CD8-positive, alpha-beta T cell (primary cell): ENCODE measurements at regions of chr14 and their contacts with region 1.

Region 1: GRCh38 chr14:33617190-33617622 is 333.7 kb downstream of the EGLN3 start:
- DNase-seq: no peak
- ATAC-seq: no peak
- H3K4me3 ChIP-seq: no peak overlapping the region
- H3K4me3 Mint-ChIP-seq: no peak overlapping the region
- H3K27ac ChIP-seq: no peak overlapping the region
- H3K27ac Mint-ChIP-seq: no peak overlapping the region
- H3K4me1 ChIP-seq: no peaks in the 10 kb centered on the region
- H3K4me1 Mint-ChIP-seq: no peaks in the 10 kb centered on the region
- H3K27me3 ChIP-seq: no peaks in the 10 kb centered on the region
- H3K27me3 Mint-ChIP-seq: no peaks in the 10 kb centered on the region
- CTCF ChIP-seq: no peak

Region 2: DNA sequence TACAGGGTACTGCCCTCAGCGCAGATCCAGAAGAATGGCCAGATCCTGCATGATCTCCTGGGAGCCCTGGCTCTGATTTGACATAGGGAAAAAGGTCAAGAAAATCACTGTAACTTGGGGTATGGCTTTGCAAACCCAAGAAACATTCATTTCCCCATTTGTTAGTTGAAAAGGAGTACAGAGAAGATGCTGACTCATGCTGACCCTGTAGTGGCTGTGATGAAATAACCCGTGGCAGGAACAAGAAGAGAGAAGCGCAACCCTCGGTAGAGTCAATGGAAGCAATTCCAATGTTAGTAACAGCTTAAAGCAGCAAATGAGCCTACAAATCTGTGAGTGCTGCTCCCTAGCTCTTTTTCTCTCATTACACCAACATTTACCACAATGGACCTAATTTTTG is 960.1 kb before region 1 on chr14:
- CTCF ChIA-PET with region 1: no interaction called
- POLR2A ChIA-PET with region 1: no interaction called
- intact Hi-C with region 1: loop called in 1 of 2 experiments (anchors 10 kb)
- DNase-seq: peak in 1 of 9 experiments; percentile 19
- ATAC-seq: no peak
- H3K4me3 ChIP-seq: no peak overlapping the region
- H3K4me3 Mint-ChIP-seq: no peak overlapping the region
- H3K27ac ChIP-seq: no peak overlapping the region
- H3K27ac Mint-ChIP-seq: no peak overlapping the region
- H3K4me1 ChIP-seq: no peaks in the 10 kb centered on the region
- H3K4me1 Mint-ChIP-seq: no peaks in the 10 kb centered on the region
- H3K27me3 ChIP-seq: no peaks in the 10 kb centered on the region
- H3K27me3 Mint-ChIP-seq: no peaks in the 10 kb centered on the region
- CTCF ChIP-seq: no peak

Region 3: DNA sequence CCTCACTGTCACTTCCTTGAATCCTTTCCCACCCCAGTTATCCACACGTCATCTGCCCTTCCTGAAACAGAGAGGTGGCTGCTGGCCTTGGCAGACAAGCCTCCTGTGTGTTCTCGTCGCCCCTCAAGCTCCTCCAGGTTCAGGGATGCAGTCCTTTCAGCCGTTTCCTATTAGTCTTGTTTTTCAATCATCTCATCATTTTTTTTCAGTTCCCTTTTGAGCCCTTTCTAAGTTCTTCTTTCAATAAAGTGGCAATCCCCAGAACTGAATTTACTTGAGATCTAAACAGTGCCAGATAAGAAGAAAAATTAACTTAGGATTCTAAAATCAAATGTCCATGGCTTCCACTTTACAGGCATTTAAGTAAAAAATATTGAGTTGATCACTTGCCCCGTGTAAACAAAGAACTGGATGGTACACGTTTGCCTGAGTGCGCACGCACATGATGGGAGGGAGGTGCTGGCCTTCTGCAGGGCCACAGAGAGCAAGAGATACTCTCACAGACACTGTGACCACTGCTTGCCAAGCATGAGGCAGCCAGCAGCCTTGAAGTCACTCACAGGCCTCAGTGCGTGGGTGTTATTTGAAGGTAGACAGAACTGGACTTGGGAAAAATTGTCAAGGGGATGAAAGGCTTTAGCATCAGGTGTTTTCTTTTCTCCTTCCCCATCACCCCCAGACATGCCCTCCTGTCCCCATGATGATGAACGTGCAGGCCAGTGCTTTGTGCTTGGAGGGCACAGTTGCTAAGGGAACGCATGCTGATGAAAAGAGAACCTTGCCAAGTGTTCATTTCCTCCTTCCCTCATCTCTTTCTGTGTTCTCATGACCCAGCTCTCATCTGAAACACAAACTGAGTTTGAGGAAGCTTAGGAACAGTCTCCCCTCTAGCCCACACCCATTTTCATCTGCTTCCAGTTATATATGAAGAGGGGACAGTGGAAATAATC is 74.6 kb before region 1 on chr14:
- CTCF ChIA-PET with region 1: no interaction called
- POLR2A ChIA-PET with region 1: no interaction called
- intact Hi-C with region 1: loop called in 1 of 2 experiments (anchors 2 kb)
- DNase-seq: no peak
- ATAC-seq: no peak
- H3K4me3 ChIP-seq: no peak overlapping the region
- H3K4me3 Mint-ChIP-seq: no peak overlapping the region
- H3K27ac ChIP-seq: no peak overlapping the region
- H3K27ac Mint-ChIP-seq: no peak overlapping the region
- H3K4me1 ChIP-seq: no peaks in the 10 kb centered on the region
- H3K4me1 Mint-ChIP-seq: no peaks in the 10 kb centered on the region
- H3K27me3 ChIP-seq: no peaks in the 10 kb centered on the region
- H3K27me3 Mint-ChIP-seq: no peaks in the 10 kb centered on the region
- CTCF ChIP-seq: no peak